Naive thymus-derived CD4-positive, alpha-beta T cell (primary cell): ENCODE measurements at regions of chr2 and their contacts with region 1.

Region 1: GRCh38 chr2:104200533-104201168 is 653.3 kb upstream of the POU3F3 start:
- DNase-seq: no peak
- ATAC-seq: no peak
- H3K4me3 ChIP-seq: no peak overlapping the region
- H3K4me3 Mint-ChIP-seq: no peak overlapping the region
- H3K27ac ChIP-seq: no peak overlapping the region
- H3K27ac Mint-ChIP-seq: no peak overlapping the region
- H3K4me1 ChIP-seq: no peaks in the 10 kb centered on the region
- H3K4me1 Mint-ChIP-seq: no peaks in the 10 kb centered on the region
- H3K27me3 ChIP-seq: no peaks in the 10 kb centered on the region
- H3K27me3 Mint-ChIP-seq: no peaks in the 10 kb centered on the region

Region 2: GRCh38 chr2:104249629-104250028 is 49.0 kb after region 1 on chr2:
- CTCF ChIA-PET with region 1: no interaction called
- POLR2A ChIA-PET with region 1: no interaction called
- intact Hi-C with region 1: loop called in 1 of 2 experiments (anchors 1 kb)
- DNase-seq: no peak
- ATAC-seq: no peak
- H3K4me3 ChIP-seq: no peak overlapping the region
- H3K4me3 Mint-ChIP-seq: no peak overlapping the region
- H3K27ac ChIP-seq: no peak overlapping the region
- H3K27ac Mint-ChIP-seq: no peak overlapping the region
- H3K4me1 ChIP-seq: no peaks in the 10 kb centered on the region
- H3K4me1 Mint-ChIP-seq: no peaks in the 10 kb centered on the region
- H3K27me3 ChIP-seq: no peaks in the 10 kb centered on the region
- H3K27me3 Mint-ChIP-seq: peaks cover 0 to 5% (median 0%) of the 10 kb centered on the region in 5 donors